CD4-positive, alpha-beta memory T cell (primary cell): ENCODE measurements at regions of chr5 and their contacts with region 1.

Region 1: GRCh38 chr5:54944364-54944763 is 41.0 kb downstream of the ESM1 start:
- DNase-seq: peak; percentile 45 to 54 (median 54)
- H3K4me3 ChIP-seq: no peak overlapping the region
- H3K4me3 Mint-ChIP-seq: no peak overlapping the region
- H3K27ac ChIP-seq: no peak overlapping the region
- H3K27ac Mint-ChIP-seq: no peak overlapping the region
- H3K4me1 ChIP-seq: no peaks in the 10 kb centered on the region
- H3K4me1 Mint-ChIP-seq: peaks cover 0 to 2% (median under 1%) of the 10 kb centered on the region in 4 donors
- H3K27me3 ChIP-seq: no peaks in the 10 kb centered on the region
- H3K27me3 Mint-ChIP-seq: no peaks in the 10 kb centered on the region

Region 2: DNA sequence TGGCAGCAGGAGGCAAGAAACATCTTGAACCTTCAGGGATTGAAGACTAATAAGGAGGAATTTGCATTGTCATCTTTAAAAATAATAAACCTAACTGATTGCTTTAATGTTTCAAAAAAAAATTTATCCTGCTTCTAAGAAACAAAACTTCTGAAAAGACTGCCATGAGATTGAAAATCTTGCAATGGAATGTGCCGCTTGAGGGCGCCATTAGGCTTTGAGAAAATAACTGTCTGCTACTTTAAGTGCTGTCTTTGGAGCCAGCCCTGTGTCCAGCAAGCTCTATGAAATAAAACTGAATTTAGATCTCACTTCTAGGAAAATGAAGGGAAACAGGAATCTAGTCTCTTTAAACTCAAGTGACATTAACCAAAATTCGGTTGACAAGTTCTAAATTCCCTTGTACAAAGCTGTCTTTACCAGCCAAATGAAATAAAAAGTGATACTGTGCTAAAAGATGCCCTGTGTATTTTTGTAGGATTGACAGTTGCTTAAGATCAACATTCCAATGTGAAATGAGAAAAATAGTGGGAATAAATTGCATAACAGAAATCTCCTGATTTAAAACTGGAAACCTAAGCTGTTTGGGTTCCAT is 38.3 kb before region 1 on chr5:
- CTCF ChIA-PET with region 1: interaction called, 134 read pairs
- POLR2A ChIA-PET with region 1: interaction called, 5 read pairs
- intact Hi-C with region 1: loop called (anchors 1 kb)
- DNase-seq: peak; percentile 51 to 62 (median 57)
- H3K4me3 ChIP-seq: no peak overlapping the region
- H3K4me3 Mint-ChIP-seq: no peak overlapping the region
- H3K27ac ChIP-seq: no peak overlapping the region
- H3K27ac Mint-ChIP-seq: no peak overlapping the region
- H3K4me1 ChIP-seq: peaks cover 9% of the 10 kb centered on the region
- H3K4me1 Mint-ChIP-seq: peaks cover 4 to 9% (median 8%) of the 10 kb centered on the region in 4 donors
- H3K27me3 ChIP-seq: no peaks in the 10 kb centered on the region
- H3K27me3 Mint-ChIP-seq: peaks cover 5 to 8% of the 10 kb centered on the region in 2 donors

Region 3: DNA sequence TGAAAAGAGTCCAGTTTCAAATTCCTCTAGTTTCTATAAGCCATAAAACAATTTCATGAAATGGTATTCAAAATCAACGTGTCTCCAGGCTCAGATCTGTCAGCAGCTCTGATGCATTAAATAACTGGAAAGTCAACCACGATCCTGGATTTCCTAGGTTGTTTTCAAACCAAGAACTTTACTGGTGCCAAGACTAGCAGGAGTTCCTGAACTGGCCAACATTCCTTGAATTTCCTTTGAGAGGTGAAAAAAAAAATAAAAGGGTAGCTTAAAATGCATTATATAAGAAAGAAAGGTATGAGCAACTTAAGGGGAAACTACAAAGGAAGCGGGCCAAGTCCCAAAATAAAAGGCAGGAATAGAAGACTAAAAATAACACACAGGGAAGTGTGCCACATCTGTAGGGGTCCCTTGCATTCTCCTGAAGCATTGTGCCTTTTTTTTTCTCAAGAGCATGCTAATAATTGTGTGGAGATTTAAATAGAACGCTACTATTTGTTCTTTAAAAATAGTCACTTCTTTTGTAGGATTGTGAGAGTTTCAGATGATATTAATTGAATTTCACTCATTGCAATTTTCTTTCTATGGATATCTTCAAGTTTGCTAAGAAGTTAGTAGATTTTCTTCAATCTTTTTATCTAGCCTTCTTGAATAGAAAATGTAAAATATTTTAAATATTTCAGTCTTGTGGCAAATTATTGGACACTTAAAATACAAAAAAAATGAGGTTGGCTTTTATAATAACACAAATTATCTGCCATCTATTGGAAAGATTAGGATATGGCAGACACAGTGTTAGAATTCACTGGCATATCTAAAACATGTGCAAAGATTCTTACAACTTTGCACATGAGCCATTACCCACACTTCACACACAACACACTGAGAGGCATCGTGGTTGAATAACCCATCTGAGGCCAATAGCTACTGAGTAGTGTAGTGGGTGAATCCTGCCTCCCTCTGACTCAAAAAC is 25.8 kb after region 1 on chr5:
- CTCF ChIA-PET with region 1: interaction called, 16 read pairs
- POLR2A ChIA-PET with region 1: no interaction called
- intact Hi-C with region 1: no loop called
- DNase-seq: no peak
- H3K4me3 ChIP-seq: no peak overlapping the region
- H3K4me3 Mint-ChIP-seq: no peak overlapping the region
- H3K27ac ChIP-seq: no peak overlapping the region
- H3K27ac Mint-ChIP-seq: no peak overlapping the region
- H3K4me1 ChIP-seq: no peaks in the 10 kb centered on the region
- H3K4me1 Mint-ChIP-seq: peaks cover 0 to 1% (median 0%) of the 10 kb centered on the region in 4 donors
- H3K27me3 ChIP-seq: no peaks in the 10 kb centered on the region
- H3K27me3 Mint-ChIP-seq: peaks cover 0 to 1% of the 10 kb centered on the region in 2 donors

Region 4: GRCh38 chr5:55062039-55062779 is 117.8 kb after region 1 on chr5:
- CTCF ChIA-PET with region 1: interaction called, 28 read pairs
- POLR2A ChIA-PET with region 1: interaction called, 3 read pairs
- intact Hi-C with region 1: no loop called
- DNase-seq: peak; percentile 42 to 63 (median 57)
- H3K4me3 ChIP-seq: peak overlapping the region; percentile 2 to 41
- H3K4me3 Mint-ChIP-seq: peak overlapping the region; percentile 82 to 91 (median 88)
- H3K27ac ChIP-seq: peak overlapping the region; percentile 1
- H3K27ac Mint-ChIP-seq: peak overlapping the region; percentile 50 to 92 (median 80)
- H3K4me1 ChIP-seq: peaks cover 38% of the 10 kb centered on the region
- H3K4me1 Mint-ChIP-seq: peaks cover 38 to 64% (median 50%) of the 10 kb centered on the region in 4 donors
- H3K27me3 ChIP-seq: no peaks in the 10 kb centered on the region
- H3K27me3 Mint-ChIP-seq: no peaks in the 10 kb centered on the region

Region 5: DNA sequence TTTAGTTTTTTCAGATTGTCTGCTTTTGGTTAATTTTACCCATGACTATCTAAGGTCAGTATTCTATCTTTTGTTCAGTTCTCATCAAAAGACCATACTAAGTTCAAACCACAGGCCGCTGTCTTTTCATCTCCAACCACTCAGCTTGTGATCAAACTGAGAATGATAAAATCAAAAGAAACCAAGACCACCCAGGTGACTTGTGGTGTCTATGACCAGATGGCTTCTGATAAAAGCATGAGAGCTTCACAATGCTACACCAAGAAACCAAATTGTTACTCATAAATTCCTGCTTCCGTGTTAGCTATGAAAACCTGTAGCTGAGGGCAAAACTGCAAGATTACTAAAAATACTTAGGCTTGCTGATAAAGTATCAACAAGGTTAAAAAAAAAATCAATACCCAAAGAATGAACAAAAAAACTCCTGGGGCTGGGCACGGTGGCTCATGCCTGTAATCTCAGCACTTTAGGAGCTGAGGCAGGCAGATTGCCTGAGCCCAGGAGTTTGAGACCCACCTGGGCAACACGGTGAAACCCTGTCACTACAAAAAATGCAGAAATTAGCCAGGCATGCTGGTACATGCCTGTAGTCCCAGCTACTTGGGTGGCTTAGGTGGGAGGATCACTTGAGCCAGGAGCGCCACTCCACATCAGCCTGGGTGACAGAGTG is 189.8 kb after region 1 on chr5:
- CTCF ChIA-PET with region 1: interaction called, 210 read pairs
- POLR2A ChIA-PET with region 1: no interaction called
- intact Hi-C with region 1: no loop called
- DNase-seq: peak in 2 of 5 donors; percentile 1
- H3K4me3 ChIP-seq: no peak overlapping the region
- H3K4me3 Mint-ChIP-seq: peak overlapping the region in 1 of 8 donors; percentile 35
- H3K27ac ChIP-seq: no peak overlapping the region
- H3K27ac Mint-ChIP-seq: no peak overlapping the region
- H3K4me1 ChIP-seq: peaks cover 10% of the 10 kb centered on the region
- H3K4me1 Mint-ChIP-seq: peaks cover 4 to 12% (median 10%) of the 10 kb centered on the region in 4 donors
- H3K27me3 ChIP-seq: no peaks in the 10 kb centered on the region
- H3K27me3 Mint-ChIP-seq: no peaks in the 10 kb centered on the region

Region 6: DNA sequence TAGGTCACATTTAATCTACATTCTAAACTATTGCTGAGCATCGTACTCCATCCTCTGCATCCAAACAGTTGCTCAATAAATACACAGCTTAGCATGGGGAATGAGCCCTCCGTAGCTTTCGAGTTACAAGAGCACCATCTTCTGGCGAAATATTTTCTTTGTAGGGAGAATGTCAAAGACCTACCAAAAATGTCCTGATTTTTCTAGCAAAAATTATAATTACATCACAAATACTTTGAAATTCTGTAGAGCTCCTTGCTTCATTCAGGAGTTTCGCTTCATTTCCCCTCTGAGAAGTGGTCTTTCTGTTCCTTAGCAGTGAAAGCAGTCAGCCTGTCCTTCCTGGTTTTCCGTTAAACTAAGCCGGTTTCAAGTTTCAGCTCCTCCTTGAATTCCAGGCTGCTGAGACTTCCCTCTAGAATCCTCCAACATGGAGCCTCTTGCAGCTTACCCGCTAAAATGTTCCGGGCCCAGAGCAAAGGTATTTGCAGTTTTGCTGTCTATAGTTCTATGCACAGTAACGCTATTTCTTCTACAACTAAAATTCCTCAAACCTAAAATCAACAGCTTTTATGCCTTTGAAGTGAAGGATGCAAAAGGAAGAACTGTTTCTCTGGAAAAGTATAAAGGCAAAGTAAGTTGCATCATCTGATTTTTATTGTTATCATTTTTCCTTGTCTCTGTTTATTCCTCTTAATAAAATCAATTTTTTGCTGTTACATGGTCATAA is 215.6 kb after region 1 on chr5 and contains the start of gene GPX8:
- CTCF ChIA-PET with region 1: interaction called, 52 read pairs
- POLR2A ChIA-PET with region 1: interaction called, 8 read pairs
- intact Hi-C with region 1: loop called (anchors 1 kb)
- DNase-seq: peak; percentile 45 to 56 (median 51)
- H3K4me3 ChIP-seq: no peak within 1 kb of the TSS
- H3K4me3 Mint-ChIP-seq: no peak within 1 kb of the TSS
- H3K27ac ChIP-seq: no peak within 1 kb of the TSS
- H3K27ac Mint-ChIP-seq: no peak within 1 kb of the TSS
- H3K4me1 ChIP-seq: no peaks in the 10 kb centered on the region
- H3K4me1 Mint-ChIP-seq: no peaks in the 10 kb centered on the region
- H3K27me3 ChIP-seq: no peaks in the 10 kb centered on the region
- H3K27me3 Mint-ChIP-seq: peaks cover 14 to 24% of the 10 kb centered on the region in 2 donors
- total RNA-seq, gene GPX8: not detected